Activated T-helper 2 cell treated with anti-CD3 and anti-CD28 coated beads, Interferon-gamma antibody, Interleukin-2, Interleukin-4, amounts not matched to agents 10 μg/mL and 5 μg/mL and 100 μg/mL, durations not matched to agents 14 hours and 24 hours and 36 hours (primary cell): ENCODE measurements at regions of chr17 and their contacts with region 1.

Region 1: GRCh38 chr17:65055348-65056261 is 935 bp downstream of the GNA13 start:
- DNase-seq: peak; percentile 54
- H3K4me3 Mint-ChIP-seq: peak overlapping the region; percentile 89
- H3K27ac Mint-ChIP-seq: peak overlapping the region; percentile 91
- H3K4me1 Mint-ChIP-seq: peaks cover 44% of the 10 kb centered on the region
- H3K27me3 Mint-ChIP-seq: peaks cover 2% of the 10 kb centered on the region

Region 2: GRCh38 chr17:64639516-64639915 is 416.1 kb before region 1 on chr17:
- intact Hi-C with region 1: no loop called
- DNase-seq: no peak
- H3K4me3 Mint-ChIP-seq: no peak overlapping the region
- H3K27ac Mint-ChIP-seq: no peak overlapping the region
- H3K4me1 Mint-ChIP-seq: peaks cover 21% of the 10 kb centered on the region
- H3K27me3 Mint-ChIP-seq: no peaks in the 10 kb centered on the region

Region 3: GRCh38 chr17:64975329-64976087 is 80.1 kb before region 1 on chr17:
- intact Hi-C with region 1: loop called (anchors 2 kb)
- DNase-seq: peak; percentile 98
- H3K4me3 Mint-ChIP-seq: peak overlapping the region; percentile 81
- H3K27ac Mint-ChIP-seq: peak overlapping the region; percentile 97
- H3K4me1 Mint-ChIP-seq: peaks cover 56% of the 10 kb centered on the region
- H3K27me3 Mint-ChIP-seq: no peaks in the 10 kb centered on the region

Region 4: GRCh38 chr17:64984851-64985521 is 70.6 kb before region 1 on chr17:
- intact Hi-C with region 1: loop called (anchors 2 kb)
- DNase-seq: peak; percentile 64
- H3K4me3 Mint-ChIP-seq: peak overlapping the region; percentile 79
- H3K27ac Mint-ChIP-seq: peak overlapping the region; percentile 99
- H3K4me1 Mint-ChIP-seq: peaks cover 47% of the 10 kb centered on the region
- H3K27me3 Mint-ChIP-seq: no peaks in the 10 kb centered on the region

Region 5: GRCh38 chr17:64998436-64999190 is 57.0 kb before region 1 on chr17:
- intact Hi-C with region 1: no loop called
- DNase-seq: no peak
- H3K4me3 Mint-ChIP-seq: no peak overlapping the region
- H3K27ac Mint-ChIP-seq: no peak overlapping the region
- H3K4me1 Mint-ChIP-seq: peaks cover 15% of the 10 kb centered on the region
- H3K27me3 Mint-ChIP-seq: peaks cover 2% of the 10 kb centered on the region

Region 6: GRCh38 chr17:65013613-65014391 is 41.8 kb before region 1 on chr17:
- intact Hi-C with region 1: loop called (anchors 2 kb)
- DNase-seq: no peak
- H3K4me3 Mint-ChIP-seq: no peak overlapping the region
- H3K27ac Mint-ChIP-seq: no peak overlapping the region
- H3K4me1 Mint-ChIP-seq: peaks cover 58% of the 10 kb centered on the region
- H3K27me3 Mint-ChIP-seq: no peaks in the 10 kb centered on the region

Region 7: DNA sequence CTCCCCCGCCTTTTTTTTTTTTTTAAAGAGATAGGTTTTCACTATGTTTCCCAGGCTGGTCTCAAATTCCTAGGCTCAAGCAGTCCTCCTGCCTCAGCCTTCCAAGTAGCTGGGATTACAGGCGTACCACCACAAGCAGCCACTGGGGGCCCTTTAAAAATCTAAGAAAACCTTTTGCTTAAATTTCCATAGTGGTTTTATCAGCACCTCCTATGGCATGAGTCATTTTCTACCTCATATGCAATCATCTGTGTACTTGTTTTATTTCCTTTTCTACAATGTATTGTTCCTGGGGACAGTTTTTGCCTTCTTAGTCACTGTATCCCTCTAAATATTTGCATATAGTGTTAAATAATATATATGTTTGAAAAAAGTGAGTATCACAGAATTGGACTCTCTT is 28.3 kb before region 1 on chr17:
- intact Hi-C with region 1: loop called (anchors 2 kb)
- DNase-seq: peak; percentile 40
- H3K4me3 Mint-ChIP-seq: peak overlapping the region; percentile 31
- H3K27ac Mint-ChIP-seq: peak overlapping the region; percentile 84
- H3K4me1 Mint-ChIP-seq: peaks cover 63% of the 10 kb centered on the region
- H3K27me3 Mint-ChIP-seq: no peaks in the 10 kb centered on the region

Region 8: GRCh38 chr17:65039336-65039988 is 16.1 kb before region 1 on chr17:
- intact Hi-C with region 1: loop called (anchors 2 kb)
- DNase-seq: peak; percentile 46
- H3K4me3 Mint-ChIP-seq: peak overlapping the region; percentile 49
- H3K27ac Mint-ChIP-seq: peak overlapping the region; percentile 95
- H3K4me1 Mint-ChIP-seq: peaks cover 74% of the 10 kb centered on the region
- H3K27me3 Mint-ChIP-seq: no peaks in the 10 kb centered on the region

Region 9: DNA sequence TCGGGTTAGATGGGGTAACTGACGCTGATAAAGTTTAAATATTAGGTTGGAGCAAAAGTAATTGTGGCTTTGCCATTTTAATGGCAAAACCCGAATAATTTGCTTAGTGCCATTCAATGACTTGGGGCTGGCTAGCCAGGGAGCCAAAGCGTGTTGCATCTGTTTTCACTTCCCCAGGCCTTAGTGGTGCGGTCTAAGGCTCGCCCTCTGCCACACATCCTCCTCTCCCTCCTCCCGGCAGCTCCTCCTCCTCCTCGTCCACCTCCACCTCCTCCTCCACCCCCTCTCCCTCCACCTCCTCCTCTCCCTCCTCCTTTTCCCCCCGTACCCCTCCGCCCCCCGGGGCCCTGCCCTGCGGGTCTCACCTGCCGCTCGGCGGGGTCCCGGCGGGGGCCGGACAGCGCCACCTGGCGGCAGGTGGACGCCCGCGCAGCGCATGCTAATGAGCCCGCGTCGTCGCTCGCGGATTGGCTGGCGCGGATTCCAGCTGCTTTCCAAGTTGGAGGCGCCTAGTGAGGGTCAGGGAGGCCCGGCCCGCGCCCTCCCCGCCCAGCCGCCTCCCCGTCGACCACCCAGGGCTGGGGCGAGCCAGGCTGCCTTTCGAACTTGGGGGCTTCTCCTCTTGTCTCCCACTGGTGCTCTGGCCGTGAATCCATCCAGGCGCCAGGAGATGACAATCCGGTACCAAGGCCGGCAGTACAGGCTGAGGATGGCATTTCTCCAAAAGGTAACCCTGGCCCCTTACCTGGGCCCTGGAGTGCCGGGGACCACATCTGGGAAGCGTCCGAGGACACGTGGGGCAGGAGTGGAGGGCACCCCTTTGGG is 44.9 kb after region 1 on chr17:
- intact Hi-C with region 1: loop called (anchors 1 kb)
- DNase-seq: peak; percentile 79
- H3K4me3 Mint-ChIP-seq: peak overlapping the region; percentile 88
- H3K27ac Mint-ChIP-seq: peak overlapping the region; percentile 98
- H3K4me1 Mint-ChIP-seq: peaks cover 31% of the 10 kb centered on the region
- H3K27me3 Mint-ChIP-seq: peaks cover 5% of the 10 kb centered on the region

Region 10: GRCh38 chr17:65278050-65278819 is 222.6 kb after region 1 on chr17:
- intact Hi-C with region 1: no loop called
- DNase-seq: no peak
- H3K4me3 Mint-ChIP-seq: no peak overlapping the region
- H3K27ac Mint-ChIP-seq: no peak overlapping the region
- H3K4me1 Mint-ChIP-seq: peaks cover 15% of the 10 kb centered on the region
- H3K27me3 Mint-ChIP-seq: peaks cover 10% of the 10 kb centered on the region

Region 11: GRCh38 chr17:66383333-66383732 is 1327.7 kb after region 1 on chr17:
- intact Hi-C with region 1: no loop called
- DNase-seq: no peak
- H3K4me3 Mint-ChIP-seq: no peak overlapping the region
- H3K27ac Mint-ChIP-seq: peak overlapping the region; percentile 80
- H3K4me1 Mint-ChIP-seq: peaks cover 56% of the 10 kb centered on the region
- H3K27me3 Mint-ChIP-seq: no peaks in the 10 kb centered on the region